ENCODE measurements at regions of chr3 and their contacts with region 1.

Region 1: DNA sequence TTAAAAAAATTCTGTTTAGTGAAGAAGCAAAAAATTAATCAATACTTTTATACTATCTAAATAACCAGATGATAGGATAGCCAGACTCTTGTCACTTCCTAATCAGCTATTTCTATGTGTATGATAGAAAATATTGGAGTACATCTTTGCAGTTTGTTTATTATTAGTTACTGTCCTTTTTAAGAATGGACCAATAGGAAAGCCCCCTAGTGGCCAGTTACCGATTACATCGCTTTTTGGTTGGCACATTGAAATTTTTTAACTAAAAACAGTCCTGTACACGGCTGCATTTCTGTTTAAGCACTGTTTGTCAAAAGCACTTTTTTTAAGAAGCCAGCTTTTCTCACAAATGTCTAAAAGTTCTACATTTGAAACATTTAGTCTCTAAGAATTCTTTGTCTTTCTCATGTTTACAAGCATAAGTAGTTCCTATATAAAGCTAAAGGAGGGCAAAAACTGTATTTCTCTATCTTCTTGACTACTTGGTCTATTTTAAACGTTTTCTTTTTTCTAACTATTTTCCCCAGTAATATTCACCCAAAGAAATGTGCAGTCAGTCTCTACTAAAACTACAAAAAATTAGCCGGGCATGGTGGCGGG is 253.2 kb upstream of the LRTM1 start:
- DNase-seq: no peak
- H3K4me3 Mint-ChIP-seq: no peak overlapping the region
- H3K27ac Mint-ChIP-seq: no peak overlapping the region
- H3K4me1 Mint-ChIP-seq: no peaks in the 10 kb centered on the region
- H3K27me3 Mint-ChIP-seq: no peaks in the 10 kb centered on the region

Region 2: GRCh38 chr3:54008104-54008503 is 1172.9 kb before region 1 on chr3:
- intact Hi-C with region 1: no loop called
- DNase-seq: no peak
- H3K4me3 Mint-ChIP-seq: no peak overlapping the region
- H3K27ac Mint-ChIP-seq: no peak overlapping the region
- H3K4me1 Mint-ChIP-seq: no peaks in the 10 kb centered on the region
- H3K27me3 Mint-ChIP-seq: no peaks in the 10 kb centered on the region

Region 3: DNA sequence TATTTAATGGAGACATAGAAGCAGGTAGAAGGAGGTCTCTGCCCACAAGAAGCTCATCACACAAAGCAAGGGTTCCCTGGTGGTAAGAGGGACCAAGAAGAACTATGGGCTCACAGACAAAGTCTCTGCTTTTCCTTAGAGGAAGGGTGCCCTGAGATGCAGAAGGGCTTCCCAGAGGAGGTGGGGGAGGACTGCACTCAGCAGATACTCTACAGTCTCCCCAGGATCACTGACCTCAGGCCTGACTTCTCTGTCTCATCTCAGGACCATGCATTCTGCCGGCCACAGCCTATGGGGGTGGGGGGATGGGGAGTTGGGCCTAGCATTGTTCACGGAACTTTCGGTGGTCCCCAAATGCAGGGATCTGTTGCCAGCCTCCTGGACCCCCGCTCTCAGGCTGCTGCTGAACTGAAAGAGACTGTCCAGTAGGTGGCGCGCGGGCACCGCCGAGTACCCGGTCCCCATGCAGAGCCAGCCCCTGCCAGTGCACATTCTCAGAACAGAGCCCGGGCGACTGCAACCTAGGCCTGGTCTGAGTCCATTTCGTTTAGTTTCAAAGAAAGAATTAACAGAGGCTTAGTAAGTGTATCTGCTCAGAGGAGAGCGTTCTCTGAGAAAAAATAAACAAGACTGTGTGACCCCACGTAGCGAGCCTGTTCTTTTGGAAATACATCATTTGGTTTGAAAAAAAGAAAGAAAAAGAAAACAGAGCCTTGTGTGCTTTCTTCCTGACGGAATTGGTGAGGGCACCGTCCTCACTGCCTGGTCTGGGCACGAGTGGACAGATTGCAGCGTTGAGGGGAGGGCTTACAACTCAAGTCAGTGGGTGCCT is 327.2 kb before region 1 on chr3:
- intact Hi-C with region 1: loop called (anchors 10 kb)
- DNase-seq: peak; percentile 10
- H3K4me3 Mint-ChIP-seq: no peak overlapping the region
- H3K27ac Mint-ChIP-seq: no peak overlapping the region
- H3K4me1 Mint-ChIP-seq: no peaks in the 10 kb centered on the region
- H3K27me3 Mint-ChIP-seq: no peaks in the 10 kb centered on the region

Region 4: DNA sequence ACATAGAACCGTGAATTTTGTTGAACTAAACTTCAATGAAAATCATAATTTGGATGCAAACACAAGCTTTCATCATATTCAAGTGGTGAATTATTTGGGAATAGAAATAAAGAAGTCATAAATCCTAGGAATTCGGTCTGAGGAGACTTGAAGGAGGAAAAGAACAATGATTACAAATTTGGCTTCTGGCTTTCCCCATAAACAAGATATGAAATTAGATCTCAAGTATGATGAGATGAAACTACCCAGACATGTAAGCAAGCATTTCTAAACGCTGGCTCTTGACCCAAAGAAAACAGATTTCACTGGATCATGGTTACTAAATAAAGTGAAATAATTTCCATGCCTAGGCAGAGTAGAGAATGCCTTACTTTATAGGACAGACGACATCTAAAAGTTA is 106.2 kb before region 1 on chr3:
- intact Hi-C with region 1: no loop called
- DNase-seq: no peak
- H3K4me3 Mint-ChIP-seq: no peak overlapping the region
- H3K27ac Mint-ChIP-seq: no peak overlapping the region
- H3K4me1 Mint-ChIP-seq: no peaks in the 10 kb centered on the region
- H3K27me3 Mint-ChIP-seq: no peaks in the 10 kb centered on the region

Region 5: GRCh38 chr3:55270976-55271375 is 89.9 kb after region 1 on chr3:
- intact Hi-C with region 1: no loop called
- DNase-seq: no peak
- H3K4me3 Mint-ChIP-seq: no peak overlapping the region
- H3K27ac Mint-ChIP-seq: no peak overlapping the region
- H3K4me1 Mint-ChIP-seq: no peaks in the 10 kb centered on the region
- H3K27me3 Mint-ChIP-seq: no peaks in the 10 kb centered on the region